ENCODE measurements at regions of chr6 and their contacts with region 1.

Region 1: DNA sequence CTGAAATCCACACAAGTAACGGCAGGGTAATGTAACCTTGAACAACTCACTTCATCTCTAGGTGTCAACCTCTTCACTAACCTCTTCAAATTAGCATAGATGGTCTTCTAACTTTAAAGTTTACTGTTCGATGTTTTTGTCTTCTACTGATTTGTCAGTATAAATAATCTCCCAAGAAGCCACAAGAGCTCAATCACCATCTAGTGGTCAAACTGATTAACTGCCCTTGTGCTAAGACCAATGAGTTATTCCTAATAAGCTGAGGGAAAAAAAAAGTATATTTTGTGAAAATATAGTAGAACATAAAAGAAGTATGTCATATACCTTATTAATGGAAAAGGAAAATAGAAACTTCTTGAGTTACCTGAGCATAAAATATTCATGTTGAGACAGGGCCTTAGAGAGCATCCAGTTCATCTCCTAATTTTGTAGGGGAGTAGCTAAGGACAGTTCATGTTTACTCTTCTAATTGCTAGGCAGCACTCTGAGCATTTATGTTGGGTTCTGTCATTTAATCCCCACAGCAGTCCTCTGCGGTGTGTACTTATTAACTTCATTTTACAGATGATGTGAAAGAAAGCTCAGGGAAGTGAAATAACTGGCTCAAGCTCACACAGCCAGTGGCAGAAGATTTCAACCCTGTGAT is 317.1 kb downstream of the ESR1 start:
- DNase-seq: no peak
- H3K4me3 ChIP-seq: no peak overlapping the region
- H3K27ac ChIP-seq: no peak overlapping the region
- H3K4me1 ChIP-seq: peaks cover 0 to 9% of the 10 kb centered on the region in 2 donors
- H3K27me3 ChIP-seq: no peaks in the 10 kb centered on the region
- CTCF ChIP-seq: peak; percentile 79 to 92 (median 87)
- POLR2A ChIP-seq: no peak

Region 2: DNA sequence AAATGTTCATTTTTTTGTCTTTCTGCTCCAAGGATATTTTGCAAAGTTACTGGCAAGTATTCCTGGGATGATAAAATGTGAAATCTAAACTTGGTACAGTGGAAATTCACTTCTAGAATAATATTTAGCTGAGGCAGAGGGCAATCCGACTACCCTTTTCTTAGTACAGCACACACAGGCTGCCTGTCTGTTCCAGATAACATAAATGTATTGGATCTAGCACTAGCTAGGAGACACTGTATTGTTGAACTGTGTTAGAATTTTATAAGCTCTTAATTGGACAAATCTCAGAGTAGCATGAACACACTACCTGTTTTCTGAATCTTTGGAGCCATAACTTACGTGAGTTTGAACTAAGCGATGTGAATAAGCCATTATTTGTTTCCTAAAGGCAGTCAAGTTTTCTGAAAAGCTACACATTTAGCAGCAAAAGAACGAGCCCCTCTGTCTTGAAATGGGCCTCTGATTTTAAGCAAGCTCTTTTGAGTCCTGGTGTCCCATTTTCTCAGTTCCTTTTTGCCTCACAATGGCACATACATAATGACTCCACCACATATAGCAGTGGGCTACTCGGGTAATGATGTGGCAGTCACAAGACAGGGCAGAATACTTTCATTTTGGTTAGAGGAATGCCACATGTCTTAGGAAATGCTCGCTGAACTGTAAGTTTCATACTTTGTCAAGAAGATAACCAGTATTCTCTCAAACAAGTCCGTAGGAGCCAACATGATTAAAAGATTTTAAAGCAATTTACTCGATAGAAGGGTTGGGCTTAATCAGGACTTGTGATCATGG is 433.6 kb before region 1 on chr6:
- intact Hi-C with region 1: loop called (anchors 5 to 10 kb)
- DNase-seq: peak in 3 of 7 donors; percentile 20 to 42 (median 25)
- H3K4me3 ChIP-seq: peak overlapping the region in 2 of 4 donors; percentile 8 to 49
- H3K27ac ChIP-seq: peak overlapping the region in 4 of 5 donors; percentile 63 to 82 (median 74)
- H3K4me1 ChIP-seq: peaks cover 0 to 6% of the 10 kb centered on the region in 2 donors
- H3K27me3 ChIP-seq: no peaks in the 10 kb centered on the region
- CTCF ChIP-seq: no peak
- POLR2A ChIP-seq: peak in 1 of 2 donors; percentile 69

Region 3: DNA sequence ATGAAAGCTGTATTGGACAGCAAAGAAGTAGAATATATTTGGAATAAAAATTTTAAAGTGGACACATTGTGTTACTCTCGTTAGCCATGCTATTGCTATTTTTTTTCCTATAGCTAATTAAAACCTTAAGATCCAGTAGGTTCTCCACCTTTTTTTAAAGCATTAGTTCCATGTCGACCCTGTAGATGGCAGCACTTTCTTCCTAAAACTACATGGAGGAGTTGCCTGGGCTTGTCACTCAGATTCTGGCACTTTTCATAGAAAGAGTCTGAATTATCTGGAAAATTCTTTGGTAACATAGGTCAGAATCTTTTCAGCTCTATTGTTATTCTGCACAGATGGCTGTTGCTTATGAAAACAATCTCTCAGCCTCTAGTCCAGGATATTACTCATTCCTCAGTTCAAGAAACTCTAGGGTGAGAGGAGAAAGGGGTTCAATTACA is 359.1 kb before region 1 on chr6:
- intact Hi-C with region 1: loop called (anchors 5 kb)
- DNase-seq: peak; percentile 49 to 69 (median 65)
- H3K4me3 ChIP-seq: no peak overlapping the region
- H3K27ac ChIP-seq: no peak overlapping the region
- H3K4me1 ChIP-seq: no peaks in the 10 kb centered on the region
- H3K27me3 ChIP-seq: no peaks in the 10 kb centered on the region
- CTCF ChIP-seq: peak; percentile 66 to 79 (median 70)
- POLR2A ChIP-seq: no peak

Region 4: DNA sequence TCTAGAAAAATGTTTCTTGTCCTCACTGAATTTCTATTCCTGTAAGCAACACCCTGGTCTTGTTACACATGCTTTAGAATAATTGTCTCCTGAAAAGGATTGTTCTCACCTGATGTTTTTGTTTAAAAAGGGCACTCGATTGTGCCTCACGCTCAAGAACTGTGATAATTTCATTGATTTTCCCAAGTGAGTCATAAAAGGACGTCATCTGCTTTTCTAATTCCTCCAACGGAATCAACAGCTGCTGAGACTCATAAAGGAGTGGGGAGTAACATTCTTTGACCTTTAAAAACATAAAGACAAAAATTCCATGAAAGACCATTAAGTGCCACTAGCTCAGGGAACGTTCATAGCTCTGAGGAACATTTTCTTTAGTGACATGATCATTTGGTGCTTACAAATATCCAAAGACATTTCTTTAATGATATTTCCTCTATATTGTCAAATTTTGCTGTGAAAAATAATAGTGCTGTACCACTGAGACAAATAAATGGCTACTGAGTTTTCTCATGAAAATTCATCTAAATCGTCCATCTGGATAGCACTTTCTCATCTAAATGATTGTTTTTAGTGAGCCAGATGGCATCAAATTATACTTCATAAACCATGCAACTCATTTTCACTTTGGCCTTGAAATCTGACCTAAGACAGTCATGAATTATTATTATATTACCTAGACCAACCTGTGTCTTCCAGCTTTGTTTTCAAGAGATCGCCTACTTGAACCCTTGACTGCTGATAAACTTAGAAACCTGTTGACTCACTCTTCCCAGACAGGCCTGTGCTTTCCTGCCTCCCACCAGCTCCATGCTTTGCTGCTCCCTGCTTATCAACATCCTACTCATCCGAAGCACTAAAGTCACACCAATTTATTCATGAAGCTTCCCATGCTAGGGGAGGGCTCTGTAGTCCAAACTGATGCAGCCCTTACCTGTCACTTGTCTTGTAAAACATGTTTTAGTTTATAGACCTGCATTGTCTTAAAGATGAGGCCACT is 334.4 kb after region 1 on chr6:
- intact Hi-C with region 1: no loop called
- DNase-seq: no peak
- H3K4me3 ChIP-seq: no peak overlapping the region
- H3K27ac ChIP-seq: no peak overlapping the region
- H3K4me1 ChIP-seq: no peaks in the 10 kb centered on the region
- H3K27me3 ChIP-seq: no peaks in the 10 kb centered on the region
- CTCF ChIP-seq: no peak
- POLR2A ChIP-seq: no peak

Measured in adrenal gland (tissue), 19 donors.